ENCODE measurements at regions of chr1 and their contacts with region 1.

Region 1: GRCh38 chr1:171794085-171794484 is 12.6 kb downstream of the METTL13 start:
- DNase-seq: peak; percentile 79
- H3K4me3 Mint-ChIP-seq: peak overlapping the region; percentile 22
- H3K27ac Mint-ChIP-seq: peak overlapping the region; percentile 94
- H3K4me1 Mint-ChIP-seq: peaks cover 22% of the 10 kb centered on the region
- H3K27me3 Mint-ChIP-seq: no peaks in the 10 kb centered on the region

Region 2: GRCh38 chr1:171877701-171878100 is 83.6 kb after region 1 on chr1:
- CTCF ChIA-PET with region 1: no interaction called
- POLR2A ChIA-PET with region 1: no interaction called
- intact Hi-C with region 1: loop called (anchors 5 kb)
- DNase-seq: no peak
- H3K4me3 Mint-ChIP-seq: no peak overlapping the region
- H3K27ac Mint-ChIP-seq: no peak overlapping the region
- H3K4me1 Mint-ChIP-seq: peaks cover 4% of the 10 kb centered on the region
- H3K27me3 Mint-ChIP-seq: no peaks in the 10 kb centered on the region

Measured in activated CD4-positive, alpha-beta memory T cell treated with anti-CD3 and anti-CD28 coated beads for 36 hours (primary cell).